Panc1 (cell line): ENCODE measurements at regions of chr17 and their contacts with region 1.

Region 1: DNA sequence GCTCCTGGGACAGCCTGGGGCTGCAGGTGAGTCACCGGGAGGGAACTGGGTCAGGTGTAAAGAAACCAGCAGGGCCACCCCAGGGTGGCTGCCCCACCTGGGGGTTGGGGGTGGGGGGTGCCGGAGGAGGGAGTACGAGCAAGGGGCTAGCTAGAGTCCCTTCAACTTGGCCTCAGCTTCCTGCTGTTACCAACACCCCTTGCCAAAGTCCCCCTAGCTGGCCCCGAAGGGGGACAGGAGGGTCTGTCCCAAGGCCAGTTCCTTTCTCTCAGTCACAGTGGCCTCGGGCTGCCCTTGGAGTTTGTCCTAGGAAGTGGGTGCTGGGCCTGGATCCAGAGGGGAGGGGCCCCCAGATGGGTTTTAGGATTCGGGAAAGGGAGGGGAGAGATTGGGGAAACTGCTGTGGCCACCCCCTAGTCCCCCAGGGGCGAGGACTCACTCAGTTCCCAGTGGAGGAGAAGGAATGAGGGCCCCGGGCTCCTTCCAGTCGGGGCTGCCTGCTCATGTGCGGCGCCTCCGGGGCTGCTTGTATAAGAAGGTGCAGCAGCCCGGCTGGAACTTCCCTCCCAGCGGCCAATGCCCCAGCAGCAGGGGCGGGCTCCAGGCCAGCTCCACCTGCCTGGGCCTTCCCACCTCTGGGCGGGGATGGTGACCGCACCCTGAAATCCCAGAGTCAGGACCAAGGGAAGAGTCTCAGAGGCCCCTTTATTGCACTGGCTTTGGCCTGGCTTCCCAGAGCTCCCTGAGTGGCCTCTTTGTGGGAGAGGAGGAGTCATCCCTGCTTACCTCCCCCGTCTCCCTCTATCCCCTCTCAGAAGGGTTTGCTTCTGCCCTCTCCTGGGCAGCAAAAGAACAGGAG is 7.3 kb downstream of the ARHGAP27 start:
- DNase-seq: no peak
- ATAC-seq: peak; percentile 85
- H3K4me3 ChIP-seq: peak overlapping the region; percentile 54 to 68
- H3K27ac ChIP-seq: peak overlapping the region; percentile 89
- H3K4me1 ChIP-seq: no peaks in the 10 kb centered on the region; the same call in 1 of the 2 replicates
- H3K27me3 ChIP-seq: no peaks in the 10 kb centered on the region
- CTCF ChIP-seq: 0 out of 2 replicates have a peak, but pooled peaks have one; percentile 59

Region 2: DNA sequence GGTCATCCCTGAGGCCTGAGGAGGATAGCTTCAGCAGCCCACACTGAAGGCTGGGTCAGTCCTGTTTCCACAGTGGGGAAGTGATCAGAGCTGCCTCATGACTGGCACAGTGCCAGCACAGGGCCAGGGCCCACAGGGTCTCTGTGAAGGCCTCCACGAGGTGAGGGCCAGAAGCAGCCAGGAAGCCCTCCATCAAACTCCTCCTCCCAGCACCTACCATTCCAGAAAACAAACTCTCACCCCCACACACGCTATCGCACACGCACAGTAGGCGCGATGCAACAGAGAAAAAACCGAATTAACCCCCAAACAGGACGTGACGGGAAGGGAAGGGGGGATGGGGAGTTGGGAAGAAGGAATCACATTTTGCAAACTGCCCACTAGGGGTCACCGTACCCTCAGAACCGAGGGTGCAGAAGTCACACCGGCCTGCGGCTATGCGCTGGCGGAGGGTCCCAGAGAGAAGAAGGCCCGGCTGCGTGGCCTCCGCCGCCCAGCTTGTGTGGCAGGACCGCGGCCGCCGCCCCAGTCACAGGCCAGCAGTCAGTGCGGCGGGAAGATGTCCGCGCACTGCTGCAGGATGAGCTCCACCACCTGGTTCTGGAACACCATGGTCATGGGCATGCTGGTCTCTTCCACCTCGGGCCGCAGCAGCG is 30.3 kb before region 1 on chr17:
- CTCF ChIA-PET with region 1: interaction called, 11 read pairs
- POLR2A ChIA-PET with region 1: no interaction called
- in situ Hi-C with region 1: no loop called
- intact Hi-C with region 1: no loop called
- DNase-seq: no peak
- ATAC-seq: peak; percentile 69
- H3K4me3 ChIP-seq: no peak overlapping the region
- H3K27ac ChIP-seq: no peak overlapping the region
- H3K4me1 ChIP-seq: no peaks in the 10 kb centered on the region; the same call in 1 of the 2 replicates
- H3K27me3 ChIP-seq: no peaks in the 10 kb centered on the region
- CTCF ChIP-seq: peak; percentile 78